ENCODE measurements at regions of chr5 and their contacts with region 1.

Region 1: GRCh38 chr5:35003018-35003957 is 44.5 kb downstream of the AGXT2 start:
- H3K4me3 Mint-ChIP-seq: no peak overlapping the region
- H3K27ac Mint-ChIP-seq: no peak overlapping the region
- H3K4me1 Mint-ChIP-seq: no peaks in the 10 kb centered on the region
- H3K27me3 Mint-ChIP-seq: peaks cover 15% of the 10 kb centered on the region

Region 2: DNA sequence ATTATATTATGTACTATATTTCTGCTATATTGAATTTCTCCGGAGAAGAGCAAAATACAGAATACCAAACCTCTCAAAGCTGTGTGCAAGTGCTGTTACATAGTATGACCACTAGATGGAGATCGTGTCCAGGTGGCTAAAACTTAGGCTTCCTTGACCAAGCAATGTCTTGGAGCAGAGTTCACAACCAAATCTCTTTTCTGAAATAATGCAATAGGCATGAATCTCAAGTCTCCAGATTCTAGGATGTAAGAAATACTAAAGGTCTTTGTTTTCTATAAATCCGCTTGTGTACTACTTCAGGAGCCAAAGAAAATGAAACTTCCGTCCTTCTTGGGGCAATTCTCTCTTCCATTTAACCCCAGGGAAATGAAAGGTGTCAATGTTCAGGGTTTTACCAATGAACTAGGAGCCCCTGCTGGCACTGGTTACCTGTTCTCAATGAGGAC is 528.7 kb before region 1 on chr5:
- intact Hi-C with region 1: loop called (anchors 5 kb)
- H3K4me3 Mint-ChIP-seq: no peak overlapping the region
- H3K27ac Mint-ChIP-seq: no peak overlapping the region
- H3K4me1 Mint-ChIP-seq: no peaks in the 10 kb centered on the region
- H3K27me3 Mint-ChIP-seq: peaks cover 2% of the 10 kb centered on the region

Region 3: GRCh38 chr5:34486160-34486848 is 517.0 kb before region 1 on chr5:
- intact Hi-C with region 1: loop called (anchors 5 kb)
- H3K4me3 Mint-ChIP-seq: no peak overlapping the region
- H3K27ac Mint-ChIP-seq: no peak overlapping the region
- H3K4me1 Mint-ChIP-seq: no peaks in the 10 kb centered on the region
- H3K27me3 Mint-ChIP-seq: peaks cover 13% of the 10 kb centered on the region

Region 4: GRCh38 chr5:34522599-34523386 is 480.5 kb before region 1 on chr5:
- intact Hi-C with region 1: loop called (anchors 10 kb)
- H3K4me3 Mint-ChIP-seq: no peak overlapping the region
- H3K27ac Mint-ChIP-seq: no peak overlapping the region
- H3K4me1 Mint-ChIP-seq: no peaks in the 10 kb centered on the region
- H3K27me3 Mint-ChIP-seq: peaks cover 3% of the 10 kb centered on the region

Measured in dendritic cell treated with granulocyte-macrophage colony-stimulating factor and Interleukin-4, amounts not matched to agents 40 ng/mL and 50 ng/mL, for 4 days (primary cell).